Left cardiac atrium (tissue), 4 donors: ENCODE measurements at regions of chr3 and their contacts with region 1.

Region 1: DNA sequence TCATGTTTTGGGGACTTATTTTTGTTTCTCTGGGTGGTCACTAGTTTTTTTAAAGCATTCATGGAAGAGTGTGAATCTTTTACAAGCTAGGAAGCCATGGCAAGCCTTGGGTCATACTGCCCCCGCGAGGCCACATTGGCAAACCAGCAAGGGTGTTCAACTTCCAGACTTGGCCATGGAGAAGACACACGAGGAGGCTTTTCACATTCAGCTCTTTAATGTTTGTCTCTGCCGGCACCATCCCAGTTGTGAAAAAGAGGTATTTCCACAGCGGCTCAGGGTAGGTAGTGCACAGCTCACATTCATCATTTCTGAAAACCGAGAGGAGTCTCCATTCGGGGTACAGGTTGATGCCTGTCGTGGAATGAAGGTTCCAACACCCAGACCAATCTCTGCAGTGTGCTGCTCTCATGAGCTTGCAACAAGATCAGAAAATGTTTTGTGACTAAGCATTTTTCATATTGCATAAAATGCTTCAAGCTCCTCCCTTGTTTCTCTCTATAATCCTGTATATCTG is 7.7 kb downstream of the CCR5 start:
- DNase-seq: peak; percentile 60
- ATAC-seq: peak; percentile 53 to 65

Region 2: GRCh38 chr3:46089237-46090011 is 289.1 kb before region 1 on chr3:
- intact Hi-C with region 1: loop called in 1 of 2 experiments (anchors 5 kb)
- DNase-seq: peak; percentile 63
- ATAC-seq: peak; percentile 89 to 94

Region 3: DNA sequence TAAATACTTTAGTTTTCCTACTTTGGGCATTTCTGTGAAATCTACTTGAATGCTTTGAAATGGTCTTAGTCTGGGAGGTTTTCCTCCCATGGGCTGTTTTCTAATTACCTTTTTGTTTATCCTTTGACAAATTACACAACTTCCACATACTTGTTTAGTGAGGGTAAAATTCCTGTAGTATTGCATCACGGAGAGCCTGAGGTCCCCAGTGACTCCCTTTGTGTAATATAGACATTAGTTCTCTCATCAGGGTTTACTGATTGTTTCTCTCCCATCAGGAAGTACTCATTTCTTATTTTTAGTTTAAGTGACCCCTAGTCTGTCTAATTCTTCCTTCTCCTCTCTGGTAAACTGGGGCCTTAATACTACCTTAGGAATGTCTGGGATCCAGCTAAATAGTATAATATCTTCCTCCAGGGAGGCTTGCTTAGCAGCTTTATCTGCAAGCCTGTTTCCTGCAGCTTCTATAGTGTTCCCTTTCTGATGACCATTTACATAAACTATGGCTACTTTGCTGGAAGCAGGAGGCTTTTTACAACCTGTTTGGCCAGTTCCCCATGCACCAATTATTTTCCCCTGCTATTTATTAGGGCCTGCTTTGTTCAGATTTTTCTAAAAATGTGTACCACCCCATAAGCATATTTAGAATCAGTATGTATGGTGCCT is 264.0 kb before region 1 on chr3:
- intact Hi-C with region 1: no loop called
- DNase-seq: no peak
- ATAC-seq: no peak

Region 4: GRCh38 chr3:46163318-46164041 is 215.0 kb before region 1 on chr3:
- intact Hi-C with region 1: no loop called
- DNase-seq: no peak
- ATAC-seq: no peak

Region 5: GRCh38 chr3:46276502-46277099 is 101.9 kb before region 1 on chr3:
- intact Hi-C with region 1: loop called in 1 of 2 experiments (anchors 10 kb)
- DNase-seq: peak; percentile 64
- ATAC-seq: peak; percentile 67 to 86